ENCODE measurements at regions of chr11 and their contacts with region 1.

Region 1: GRCh38 chr11:78860720-78861422 is 286.2 kb upstream of the NARS2 start:
- DNase-seq: no peak
- H3K4me3 ChIP-seq: no peak overlapping the region
- H3K27ac ChIP-seq: no peak overlapping the region
- H3K4me1 ChIP-seq: no peaks in the 10 kb centered on the region
- H3K27me3 ChIP-seq: peaks cover 29% of the 10 kb centered on the region
- CTCF ChIP-seq: no peak

Region 2: GRCh38 chr11:78542007-78542406 is 318.9 kb before region 1 on chr11:
- CTCF ChIA-PET with region 1: no interaction called
- POLR2A ChIA-PET with region 1: no interaction called
- intact Hi-C with region 1: no loop called
- DNase-seq: no peak
- H3K4me3 ChIP-seq: no peak overlapping the region
- H3K27ac ChIP-seq: no peak overlapping the region
- H3K4me1 ChIP-seq: no peaks in the 10 kb centered on the region
- H3K27me3 ChIP-seq: no peaks in the 10 kb centered on the region
- CTCF ChIP-seq: no peak

Region 3: GRCh38 chr11:78916759-78917158 is 55.9 kb after region 1 on chr11:
- CTCF ChIA-PET with region 1: no interaction called
- POLR2A ChIA-PET with region 1: no interaction called
- intact Hi-C with region 1: no loop called
- DNase-seq: no peak
- H3K4me3 ChIP-seq: no peak overlapping the region
- H3K27ac ChIP-seq: no peak overlapping the region
- H3K4me1 ChIP-seq: no peaks in the 10 kb centered on the region
- H3K27me3 ChIP-seq: peaks cover 99% of the 10 kb centered on the region
- CTCF ChIP-seq: peak; percentile 17; the same call in 1 of the 2 replicates

Region 4: DNA sequence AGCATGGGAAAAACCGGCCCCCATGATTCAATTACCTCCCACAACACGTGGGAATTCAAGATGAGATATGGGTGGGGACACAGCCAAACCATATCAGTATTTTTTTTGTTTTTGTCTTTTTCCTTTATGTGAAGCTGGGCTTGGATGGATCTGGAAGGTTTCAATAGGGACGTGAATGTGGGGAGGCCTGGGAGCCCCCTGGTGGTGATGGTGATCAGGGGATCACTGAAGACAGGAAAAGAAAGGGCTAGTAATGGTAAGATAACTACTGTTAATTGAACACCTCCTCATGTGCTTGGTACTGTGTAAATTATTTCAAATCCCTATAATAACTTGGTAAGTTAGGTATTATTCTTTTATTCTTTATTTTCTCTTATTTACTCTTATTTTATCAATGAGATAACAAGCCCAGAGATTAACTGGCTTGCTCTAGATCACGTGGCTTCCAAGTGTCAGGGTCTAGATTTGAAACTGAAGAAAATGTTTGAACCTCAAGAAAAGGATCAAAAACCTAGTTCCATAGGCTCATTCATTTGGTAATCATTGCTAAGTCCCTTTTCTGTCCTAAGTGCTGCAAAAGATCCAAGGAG is 215.8 kb after region 1 on chr11:
- CTCF ChIA-PET with region 1: interaction called, 10 read pairs
- POLR2A ChIA-PET with region 1: no interaction called
- intact Hi-C with region 1: no loop called
- DNase-seq: peak in 1 of 2 experiments; percentile 26
- H3K4me3 ChIP-seq: no peak overlapping the region
- H3K27ac ChIP-seq: no peak overlapping the region
- H3K4me1 ChIP-seq: no peaks in the 10 kb centered on the region
- H3K27me3 ChIP-seq: peaks cover 37% of the 10 kb centered on the region
- CTCF ChIP-seq: peak; percentile 86